ENCODE measurements at regions of chr5 and their contacts with region 1.

Region 1: GRCh38 chr5:51802551-51803184 is 419.4 kb downstream of the ISL1 start:
- DNase-seq: no peak
- H3K4me3 ChIP-seq: no peak overlapping the region
- H3K4me3 Mint-ChIP-seq: no peak overlapping the region
- H3K27ac ChIP-seq: no peak overlapping the region
- H3K27ac Mint-ChIP-seq: no peak overlapping the region
- H3K4me1 ChIP-seq: no peaks in the 10 kb centered on the region
- H3K4me1 Mint-ChIP-seq: no peaks in the 10 kb centered on the region
- H3K27me3 ChIP-seq: no peaks in the 10 kb centered on the region
- H3K27me3 Mint-ChIP-seq: peaks cover 0 to 1% (median 0%) of the 10 kb centered on the region in 3 donors
- CTCF ChIP-seq: no peak

Region 2: DNA sequence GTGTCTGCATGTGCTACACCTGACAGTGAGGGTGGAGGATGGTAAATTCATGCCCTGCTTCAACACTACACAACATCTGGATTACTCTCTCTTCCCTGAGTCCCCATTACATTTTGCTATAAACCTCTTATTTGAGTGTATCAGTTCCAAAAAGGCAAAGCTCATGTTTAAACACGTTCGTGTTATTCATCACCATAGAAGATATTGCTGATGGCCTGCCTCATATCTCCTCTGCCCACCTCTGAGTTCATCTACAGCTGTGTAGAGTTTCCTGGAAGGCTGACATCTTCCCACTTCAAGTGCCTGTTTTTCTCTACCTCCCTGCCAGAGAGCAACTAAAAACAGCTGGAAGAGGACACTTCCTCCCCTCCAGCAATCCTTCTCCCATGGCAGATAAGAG is 13.8 kb after region 1 on chr5:
- intact Hi-C with region 1: no loop called
- DNase-seq: no peak
- H3K4me3 ChIP-seq: no peak overlapping the region
- H3K4me3 Mint-ChIP-seq: no peak overlapping the region
- H3K27ac ChIP-seq: no peak overlapping the region
- H3K27ac Mint-ChIP-seq: no peak overlapping the region
- H3K4me1 ChIP-seq: no peaks in the 10 kb centered on the region
- H3K4me1 Mint-ChIP-seq: no peaks in the 10 kb centered on the region
- H3K27me3 ChIP-seq: no peaks in the 10 kb centered on the region
- H3K27me3 Mint-ChIP-seq: no peaks in the 10 kb centered on the region
- CTCF ChIP-seq: no peak

Region 3: GRCh38 chr5:52043543-52043942 is 240.9 kb after region 1 on chr5:
- intact Hi-C with region 1: loop called in 1 of 2 experiments (anchors 5 kb)
- DNase-seq: no peak
- H3K4me3 ChIP-seq: no peak overlapping the region
- H3K4me3 Mint-ChIP-seq: no peak overlapping the region
- H3K27ac ChIP-seq: no peak overlapping the region
- H3K27ac Mint-ChIP-seq: no peak overlapping the region
- H3K4me1 ChIP-seq: no peaks in the 10 kb centered on the region
- H3K4me1 Mint-ChIP-seq: no peaks in the 10 kb centered on the region
- H3K27me3 ChIP-seq: no peaks in the 10 kb centered on the region
- H3K27me3 Mint-ChIP-seq: no peaks in the 10 kb centered on the region
- CTCF ChIP-seq: no peak